Activated naive CD8-positive, alpha-beta T cell treated with anti-CD3 and anti-CD28 coated beads, Interleukin-2, amount 10 ng/mL, durations not matched to agents 7 days and 5 days (primary cell): ENCODE measurements at regions of chr9 and their contacts with region 1.

Region 1: GRCh38 chr9:99092643-99093491 is 12.0 kb upstream of the TGFBR1 start:
- DNase-seq: peak; percentile 65
- ATAC-seq: peak; percentile 83
- H3K4me3 Mint-ChIP-seq: peak overlapping the region; percentile 74
- H3K27ac Mint-ChIP-seq: peak overlapping the region; percentile 93
- H3K4me1 Mint-ChIP-seq: peaks cover 63% of the 10 kb centered on the region
- H3K27me3 Mint-ChIP-seq: no peaks in the 10 kb centered on the region

Region 2: DNA sequence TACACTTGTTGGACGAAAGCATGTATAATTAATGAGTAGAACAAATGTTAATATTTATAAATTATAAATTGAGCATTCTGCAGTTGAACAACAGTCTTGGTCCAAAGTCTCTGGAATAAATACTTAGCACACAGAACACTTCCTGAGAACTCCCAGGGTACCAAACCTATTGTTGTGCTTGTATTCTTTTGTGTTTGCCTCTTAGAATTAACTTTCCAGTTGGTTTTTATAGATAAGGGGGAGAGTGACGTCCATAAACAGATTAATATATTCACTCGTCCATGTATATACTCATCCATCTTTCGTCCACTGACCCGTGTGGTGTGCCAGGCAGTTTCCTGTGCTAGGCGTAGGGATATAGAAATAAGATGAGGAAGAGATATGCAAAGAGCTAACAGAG is 50.2 kb before region 1 on chr9:
- POLR2A ChIA-PET with region 1: no interaction called
- DNase-seq: no peak
- ATAC-seq: no peak
- H3K4me3 Mint-ChIP-seq: no peak overlapping the region
- H3K27ac Mint-ChIP-seq: no peak overlapping the region
- H3K4me1 Mint-ChIP-seq: peaks cover 56% of the 10 kb centered on the region
- H3K27me3 Mint-ChIP-seq: no peaks in the 10 kb centered on the region

Region 3: DNA sequence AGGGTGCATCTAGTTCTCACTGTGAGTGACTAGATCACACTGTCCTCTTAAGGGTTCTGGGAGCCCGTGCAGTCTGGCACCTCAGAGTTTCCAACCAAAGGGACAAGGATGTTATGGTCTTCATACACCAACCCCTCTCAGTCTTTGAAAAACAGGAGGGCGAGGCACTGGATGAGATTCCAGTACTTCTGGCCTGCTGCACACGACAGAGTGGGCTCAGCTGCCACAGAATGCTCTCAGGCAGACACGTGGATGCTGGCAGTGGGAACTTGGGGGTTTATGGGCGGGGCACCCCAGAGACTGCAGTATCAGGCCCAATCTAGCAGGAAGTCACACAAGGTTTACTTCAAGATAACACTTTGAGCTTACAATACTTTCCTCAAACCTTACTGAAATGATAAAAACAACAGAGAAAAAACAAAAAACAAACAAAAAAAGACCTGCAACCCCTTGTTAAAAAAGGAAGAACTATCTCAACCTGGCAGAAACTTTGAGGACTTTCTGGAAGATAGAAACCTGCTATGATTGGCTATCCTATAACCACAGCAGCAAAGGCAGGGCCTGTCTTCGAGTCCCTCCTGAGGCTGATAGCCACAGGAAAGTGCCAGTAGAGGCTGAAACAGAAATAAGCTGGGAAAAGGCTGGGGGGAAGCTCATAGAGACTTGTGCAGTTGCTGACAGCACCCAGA is 16.2 kb before region 1 on chr9:
- POLR2A ChIA-PET with region 1: interaction called, 33 read pairs
- DNase-seq: peak; percentile 65
- ATAC-seq: peak; percentile 95
- H3K4me3 Mint-ChIP-seq: peak overlapping the region; percentile 53
- H3K27ac Mint-ChIP-seq: peak overlapping the region; percentile 89
- H3K4me1 Mint-ChIP-seq: peaks cover 38% of the 10 kb centered on the region
- H3K27me3 Mint-ChIP-seq: peaks cover 2% of the 10 kb centered on the region